ENCODE measurements at regions of chr14 and their contacts with region 1.

Region 1: DNA sequence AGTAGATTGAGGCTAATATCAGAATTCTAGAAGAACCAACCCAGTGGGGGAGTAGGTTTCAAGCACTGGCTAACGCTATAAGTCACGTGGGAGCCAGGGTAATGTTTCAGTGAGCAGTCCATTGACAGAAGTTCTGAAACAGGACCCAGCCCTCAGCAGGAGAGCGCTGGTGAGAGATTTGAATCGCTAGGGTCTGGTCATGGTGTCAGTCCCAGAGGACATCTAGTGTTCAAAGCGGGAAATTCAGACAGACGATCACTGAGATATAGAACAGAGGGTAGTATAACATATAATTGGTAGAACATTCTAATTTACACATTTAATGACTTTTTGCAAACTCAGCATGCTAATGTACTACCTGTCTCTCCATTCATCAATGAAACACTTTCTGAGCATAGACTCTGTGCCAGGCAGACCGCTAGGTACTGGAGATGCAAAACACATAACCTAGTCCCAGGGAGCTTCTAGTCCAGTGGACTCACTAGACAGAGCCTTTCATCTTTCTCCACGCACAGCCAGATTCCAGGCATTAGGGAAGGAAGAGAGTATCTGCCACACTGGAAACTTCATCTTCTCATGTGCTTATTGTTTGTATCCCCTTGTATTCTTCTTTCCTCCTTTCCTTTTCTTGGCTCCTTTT is 35.4 kb upstream of the RNASE3 start:
- DNase-seq: peak; percentile 83
- H3K4me3 Mint-ChIP-seq: no peak overlapping the region
- H3K27ac Mint-ChIP-seq: no peak overlapping the region
- H3K4me1 Mint-ChIP-seq: peaks cover 5% of the 10 kb centered on the region
- H3K27me3 Mint-ChIP-seq: peaks cover 27% of the 10 kb centered on the region

Region 2: DNA sequence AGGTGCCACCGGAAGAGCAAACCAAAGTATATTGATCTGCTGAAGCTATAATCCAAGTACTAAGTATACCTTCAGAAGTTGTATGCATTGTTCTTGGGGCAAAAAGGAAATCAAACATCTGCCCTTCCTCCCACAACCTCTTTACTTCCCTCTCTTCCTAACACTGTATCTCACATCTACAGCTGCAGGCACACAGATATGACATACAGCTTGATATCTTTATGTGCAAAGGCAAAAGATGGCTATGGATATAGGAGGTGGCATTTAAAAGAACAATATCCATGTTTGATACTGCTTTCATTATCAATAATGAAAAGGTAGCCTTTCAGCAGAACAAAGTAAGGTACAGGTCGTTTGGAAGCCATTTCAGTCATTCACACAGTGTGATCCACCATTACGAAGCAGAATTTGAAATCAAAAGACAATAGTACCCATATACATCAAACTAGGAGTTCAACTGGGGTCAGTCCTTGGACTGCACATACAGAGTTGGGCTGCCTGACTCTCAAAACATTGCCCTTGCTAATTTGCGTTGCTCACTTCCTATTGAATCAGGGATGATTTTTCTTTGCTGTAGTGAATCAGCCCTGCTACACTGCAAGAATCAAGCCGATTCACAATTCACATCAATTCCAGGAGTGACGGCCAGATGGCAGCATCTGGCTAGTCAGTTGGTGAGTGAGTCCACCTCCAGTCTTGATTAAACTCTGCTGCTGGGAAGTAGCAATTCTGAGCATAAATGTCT is 158.3 kb before region 1 on chr14:
- intact Hi-C with region 1: loop called (anchors 1 kb)
- DNase-seq: peak; percentile 90
- H3K4me3 Mint-ChIP-seq: no peak overlapping the region
- H3K27ac Mint-ChIP-seq: no peak overlapping the region
- H3K4me1 Mint-ChIP-seq: peaks cover 4% of the 10 kb centered on the region
- H3K27me3 Mint-ChIP-seq: peaks cover 7% of the 10 kb centered on the region

Region 3: DNA sequence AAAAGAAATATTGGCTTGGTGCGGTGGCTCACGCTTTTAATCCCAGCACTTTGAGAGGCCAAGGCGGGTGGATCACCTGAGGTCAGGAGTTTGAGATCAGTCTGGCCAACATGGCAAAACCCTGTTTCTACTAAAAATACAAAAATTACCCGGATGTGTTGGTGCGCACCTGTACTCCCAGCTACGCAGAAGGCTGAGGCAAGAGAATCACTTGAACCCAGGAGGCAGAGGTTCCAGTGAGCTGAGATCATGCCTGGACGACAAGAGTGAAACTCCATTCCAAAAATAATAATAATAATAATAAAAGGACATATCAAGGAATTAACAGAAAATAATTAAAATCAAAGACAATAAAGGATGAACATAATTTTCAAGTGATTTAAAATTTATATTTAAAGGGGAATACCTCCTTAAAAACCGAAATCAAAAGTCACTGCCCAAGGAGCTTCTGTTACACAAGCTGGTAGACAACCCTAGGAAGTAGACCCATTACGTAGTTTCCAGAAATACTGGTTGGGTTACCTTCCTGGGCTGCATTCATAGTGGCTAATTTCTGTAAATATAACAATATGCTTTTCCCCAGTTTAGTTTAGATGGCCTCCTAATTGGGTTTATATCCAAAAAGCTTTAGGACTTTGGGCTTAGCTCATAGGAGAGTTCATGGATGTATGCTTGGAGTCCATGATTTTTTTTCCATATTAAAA is 112.4 kb before region 1 on chr14:
- intact Hi-C with region 1: no loop called
- DNase-seq: no peak
- H3K4me3 Mint-ChIP-seq: no peak overlapping the region
- H3K27ac Mint-ChIP-seq: no peak overlapping the region
- H3K4me1 Mint-ChIP-seq: no peaks in the 10 kb centered on the region
- H3K27me3 Mint-ChIP-seq: no peaks in the 10 kb centered on the region

Region 4: DNA sequence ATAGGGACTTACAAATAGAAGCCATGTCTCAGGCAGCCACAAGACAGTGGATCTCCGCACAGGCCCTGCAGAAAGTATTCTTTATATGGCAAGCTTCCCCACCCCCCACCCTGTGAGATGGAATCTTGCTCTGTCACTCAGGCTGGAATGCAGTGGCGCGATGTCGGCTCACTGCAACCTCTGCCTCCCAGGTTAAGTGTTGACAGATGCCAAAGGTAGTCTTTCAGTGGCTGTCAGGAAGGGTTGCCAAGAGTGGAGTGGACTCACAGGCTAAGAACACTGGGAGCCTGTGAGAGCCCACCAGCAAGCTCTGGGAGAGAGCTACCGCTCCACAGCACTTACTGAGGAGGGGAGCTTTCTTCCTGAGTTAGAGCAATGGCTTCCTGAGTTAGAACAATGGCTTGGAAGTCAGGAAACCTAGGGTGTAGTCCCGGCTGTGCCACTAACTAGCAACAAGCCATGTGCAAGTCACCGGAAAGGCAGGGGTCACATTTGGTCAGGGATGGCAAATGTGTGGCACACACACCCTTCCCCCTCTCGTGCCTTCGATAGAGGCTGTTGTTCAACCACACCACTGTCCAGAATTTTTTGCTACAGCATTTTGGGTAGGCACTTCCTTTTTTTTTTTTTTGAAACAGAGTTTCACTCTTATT is 55.8 kb before region 1 on chr14:
- intact Hi-C with region 1: no loop called
- DNase-seq: no peak
- H3K4me3 Mint-ChIP-seq: no peak overlapping the region
- H3K27ac Mint-ChIP-seq: no peak overlapping the region
- H3K4me1 Mint-ChIP-seq: no peaks in the 10 kb centered on the region
- H3K27me3 Mint-ChIP-seq: peaks cover 5% of the 10 kb centered on the region

Region 5: DNA sequence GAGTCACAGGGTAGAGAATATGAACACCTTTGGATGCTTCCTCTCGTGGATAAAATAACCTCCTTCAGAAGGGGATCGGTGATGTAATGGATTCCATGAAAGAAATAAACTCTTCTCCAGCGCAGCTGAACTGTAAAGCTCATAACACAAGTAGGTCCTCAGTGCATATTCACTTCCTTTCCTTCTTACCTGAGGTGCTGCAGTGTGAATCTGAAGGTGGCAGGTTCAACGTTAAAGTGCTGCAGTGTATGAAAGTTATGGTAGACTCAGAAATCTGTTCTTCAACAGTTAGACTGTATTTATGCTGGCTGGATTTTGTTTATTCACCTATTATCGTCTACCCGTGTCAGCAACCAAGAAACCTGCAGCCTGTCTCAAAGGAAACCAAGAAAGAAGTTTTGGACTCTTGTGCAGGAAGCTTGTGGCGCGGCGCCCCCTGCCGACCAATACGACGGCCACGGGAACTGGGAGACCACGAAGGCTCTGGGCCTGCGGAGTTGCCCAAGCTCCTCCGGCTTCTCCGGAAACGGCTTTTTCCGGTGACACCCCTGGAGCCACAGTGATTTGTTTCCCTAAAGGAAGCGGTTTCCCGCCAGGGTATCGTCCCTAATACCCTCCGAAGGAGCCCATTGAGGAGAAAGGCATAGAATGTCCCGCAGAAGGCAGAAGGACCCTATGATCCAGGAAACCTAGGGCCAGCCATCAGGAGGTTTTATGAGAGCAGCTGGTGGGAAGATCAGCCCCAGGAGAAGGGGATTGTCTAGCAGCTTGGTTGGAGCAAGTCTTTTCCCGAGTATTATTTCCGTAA is 17.8 kb after region 1 on chr14:
- intact Hi-C with region 1: loop called (anchors 2 kb)
- DNase-seq: peak; percentile 93
- H3K4me3 Mint-ChIP-seq: peak overlapping the region; percentile 53
- H3K27ac Mint-ChIP-seq: no peak overlapping the region
- H3K4me1 Mint-ChIP-seq: peaks cover 10% of the 10 kb centered on the region
- H3K27me3 Mint-ChIP-seq: peaks cover 28% of the 10 kb centered on the region

Region 6: GRCh38 chr14:20922474-20922873 is 66.7 kb after region 1 on chr14:
- intact Hi-C with region 1: no loop called
- DNase-seq: no peak
- H3K4me3 Mint-ChIP-seq: no peak overlapping the region
- H3K27ac Mint-ChIP-seq: no peak overlapping the region
- H3K4me1 Mint-ChIP-seq: no peaks in the 10 kb centered on the region
- H3K27me3 Mint-ChIP-seq: peaks cover 20% of the 10 kb centered on the region

Region 7: DNA sequence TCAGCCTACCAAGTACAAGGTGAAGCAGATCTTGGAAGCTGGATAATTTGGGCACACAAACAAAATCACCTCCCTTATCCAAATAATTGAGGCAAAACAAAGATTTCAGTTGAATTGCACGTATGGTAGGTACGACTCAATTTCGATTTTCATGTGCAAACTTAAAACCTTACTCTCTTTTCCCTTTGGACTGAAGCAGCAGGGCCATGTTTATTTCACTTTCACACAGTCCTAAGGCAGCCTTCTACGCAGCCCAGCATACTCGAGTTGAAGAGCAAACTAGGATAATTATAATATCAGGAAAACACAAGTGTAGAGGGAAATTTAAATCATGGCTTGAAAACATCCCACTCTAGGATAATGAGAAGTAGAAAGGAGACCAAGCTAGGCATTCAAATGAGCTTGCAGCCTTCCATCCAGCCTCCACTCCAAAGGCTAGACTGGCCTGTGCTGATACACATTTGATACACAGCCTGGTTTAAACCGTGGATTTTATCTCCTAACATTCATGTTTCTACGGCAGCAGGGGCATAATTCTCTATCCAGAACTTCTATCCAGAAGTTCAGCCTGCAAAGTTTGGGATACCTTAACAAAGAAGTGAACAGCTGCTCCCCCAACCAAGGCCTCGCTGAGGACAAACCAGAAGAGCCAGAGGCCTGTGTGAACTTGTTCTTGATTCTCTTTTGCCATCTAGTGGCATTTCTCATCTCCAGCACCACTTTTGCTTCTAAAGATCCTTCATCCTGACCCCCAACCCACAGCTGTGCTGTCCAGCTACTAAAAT is 184.0 kb after region 1 on chr14:
- intact Hi-C with region 1: loop called (anchors 1 kb)
- DNase-seq: peak; percentile 72
- H3K4me3 Mint-ChIP-seq: no peak overlapping the region
- H3K27ac Mint-ChIP-seq: no peak overlapping the region
- H3K4me1 Mint-ChIP-seq: no peaks in the 10 kb centered on the region
- H3K27me3 Mint-ChIP-seq: peaks cover 29% of the 10 kb centered on the region